Activated naive CD4-positive, alpha-beta T cell treated with anti-CD3 and anti-CD28 coated beads for 36 hours (primary cell): ENCODE measurements at regions of chr19 and their contacts with region 1.

Region 1: GRCh38 chr19:49786376-49786820 is 19.6 kb downstream of the AP2A1 start:
- DNase-seq: no peak
- H3K4me3 Mint-ChIP-seq: no peak overlapping the region
- H3K27ac Mint-ChIP-seq: no peak overlapping the region
- H3K4me1 Mint-ChIP-seq: no peaks in the 10 kb centered on the region
- H3K27me3 Mint-ChIP-seq: no peaks in the 10 kb centered on the region

Region 2: DNA sequence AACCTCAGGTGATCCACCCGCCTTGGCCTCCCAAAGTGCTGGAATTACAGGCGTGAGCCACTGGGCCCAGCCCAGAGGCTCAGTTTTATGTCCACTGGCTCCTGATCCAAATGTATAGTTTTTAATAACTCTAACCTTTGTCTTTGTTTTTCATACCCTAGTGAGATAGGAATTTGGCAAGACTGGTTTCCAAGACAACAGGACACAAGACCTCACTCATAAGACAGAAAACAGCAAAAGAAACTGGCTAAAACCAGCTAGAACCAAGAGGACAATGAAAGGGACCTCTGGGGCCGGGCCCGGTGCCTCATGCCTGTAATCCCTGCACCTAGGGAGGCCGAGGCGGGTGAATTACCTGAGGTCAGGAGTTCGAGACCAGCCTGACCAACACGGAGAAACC is 67.9 kb before region 1 on chr19:
- CTCF ChIA-PET with region 1: interaction called, 10 read pairs
- intact Hi-C with region 1: no loop called
- DNase-seq: no peak
- H3K4me3 Mint-ChIP-seq: peak overlapping the region; percentile 46
- H3K27ac Mint-ChIP-seq: no peak overlapping the region
- H3K4me1 Mint-ChIP-seq: peaks cover 16% of the 10 kb centered on the region
- H3K27me3 Mint-ChIP-seq: no peaks in the 10 kb centered on the region